Activated CD8-positive, alpha-beta T cell treated with anti-CD3 and anti-CD28 coated beads, Interleukin-2, amount 10 ng/mL, durations not matched to agents 7 days and 5 days (primary cell): ENCODE measurements at regions of chr1 and their contacts with region 1.

Region 1: GRCh38 chr1:224116131-224116530 is 2.2 kb downstream of the FBXO28 start:
- DNase-seq: no peak
- ATAC-seq: peak; percentile 36
- H3K4me3 Mint-ChIP-seq: peak overlapping the region; percentile 38
- H3K27ac Mint-ChIP-seq: peak overlapping the region; percentile 34
- H3K4me1 Mint-ChIP-seq: peaks cover 38% of the 10 kb centered on the region
- H3K27me3 Mint-ChIP-seq: peaks cover 8% of the 10 kb centered on the region

Region 2: GRCh38 chr1:224127925-224128819 is 12.0 kb after region 1 on chr1:
- CTCF ChIA-PET with region 1: interaction called, 11 read pairs
- POLR2A ChIA-PET with region 1: no interaction called
- DNase-seq: no peak
- ATAC-seq: no peak
- H3K4me3 Mint-ChIP-seq: no peak overlapping the region
- H3K27ac Mint-ChIP-seq: no peak overlapping the region
- H3K4me1 Mint-ChIP-seq: peaks cover 3% of the 10 kb centered on the region
- H3K27me3 Mint-ChIP-seq: no peaks in the 10 kb centered on the region

Region 3: GRCh38 chr1:224168859-224169380 is 52.8 kb after region 1 on chr1:
- CTCF ChIA-PET with region 1: interaction called, 26 read pairs
- POLR2A ChIA-PET with region 1: no interaction called
- DNase-seq: peak; percentile 53
- ATAC-seq: peak; percentile 83
- H3K4me3 Mint-ChIP-seq: peak overlapping the region; percentile 40
- H3K27ac Mint-ChIP-seq: peak overlapping the region; percentile 74
- H3K4me1 Mint-ChIP-seq: peaks cover 45% of the 10 kb centered on the region
- H3K27me3 Mint-ChIP-seq: peaks cover 5% of the 10 kb centered on the region

Region 4: GRCh38 chr1:224329842-224330753 is 214.0 kb after region 1 on chr1 and contains the start of gene NVL:
- CTCF ChIA-PET with region 1: interaction called, 51 read pairs
- POLR2A ChIA-PET with region 1: interaction called, 3 read pairs
- DNase-seq: peak; percentile 86
- ATAC-seq: peak; percentile 88
- H3K4me3 Mint-ChIP-seq: peak within 1 kb of the TSS; percentile 93
- H3K27ac Mint-ChIP-seq: peak within 1 kb of the TSS; percentile 100
- H3K4me1 Mint-ChIP-seq: peaks cover 54% of the 10 kb centered on the region
- H3K27me3 Mint-ChIP-seq: no peaks in the 10 kb centered on the region
- total RNA-seq, gene NVL: 48.5 to 56.2 TPM